HCT116 (cell line): ENCODE measurements at regions of chr16 and their contacts with region 1.

Region 1: GRCh38 chr16:88685156-88686061 is 898 bp downstream of the SNAI3 start:
- DNase-seq: no peak
- ATAC-seq: peak; percentile 19
- H3K4me3 ChIP-seq: peak overlapping the region; percentile 68 to 83
- H3K27ac ChIP-seq: peak overlapping the region; percentile 25; the same call in 1 of the 2 replicates
- H3K4me1 ChIP-seq: peaks cover 25 to 38% of the 10 kb centered on the region in 2 experiments
- H3K27me3 ChIP-seq: no peaks in the 10 kb centered on the region
- CTCF ChIP-seq: peak in 2 of 3 experiments; percentile 82 to 85; a peak in 5 of 6 replicates
- POLR2A ChIP-seq: no peak
- RAD21 ChIP-seq: no peak

Region 2: DNA sequence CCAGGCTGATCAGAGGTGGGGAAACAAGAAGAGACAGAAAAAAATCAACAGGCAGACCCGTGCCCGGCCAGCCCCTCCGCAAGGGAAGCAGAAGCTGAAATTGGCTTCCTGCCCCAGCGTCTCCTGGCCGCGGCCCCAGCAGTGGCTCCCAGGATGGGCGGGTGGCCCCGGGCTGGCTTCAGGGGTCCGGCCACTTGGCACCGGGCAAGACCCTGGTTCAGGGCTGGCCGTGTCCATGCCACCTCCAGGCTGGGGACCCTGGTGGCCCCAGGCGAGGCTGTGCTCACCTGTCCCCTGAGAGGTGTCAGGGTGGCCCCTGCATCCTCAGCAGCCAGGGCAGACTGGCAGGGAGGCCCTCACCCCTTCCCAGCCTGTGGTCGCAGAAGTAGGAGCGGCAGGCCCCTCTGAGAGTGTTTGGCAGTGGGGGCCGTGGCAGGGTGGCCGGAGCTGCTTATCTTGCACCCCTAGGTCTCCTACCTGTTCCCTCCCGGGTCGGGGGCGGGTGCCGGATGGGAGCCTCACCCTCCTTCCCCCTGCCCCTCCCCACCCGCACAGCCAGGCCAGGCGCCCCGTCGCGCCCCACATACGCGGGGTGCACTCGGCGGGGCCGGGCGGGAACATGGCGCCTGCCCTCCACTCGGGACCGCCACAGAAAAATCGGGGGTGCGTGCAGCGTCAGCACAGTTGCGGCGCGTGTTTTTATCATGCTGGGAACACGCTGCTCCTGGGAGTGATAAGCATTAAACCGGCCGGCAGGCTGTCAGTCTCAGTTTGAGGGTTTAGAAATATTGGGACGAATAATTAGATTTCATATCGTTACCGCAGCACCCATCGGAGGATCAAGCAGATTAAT is 161.9 kb before region 1 on chr16:
- CTCF ChIA-PET with region 1: no interaction called
- POLR2A ChIA-PET with region 1: no interaction called
- RAD21 ChIA-PET with region 1: no interaction called
- intact Hi-C with region 1: no loop called
- DNase-seq: no peak
- ATAC-seq: no peak
- H3K4me3 ChIP-seq: no peak overlapping the region
- H3K27ac ChIP-seq: no peak overlapping the region
- H3K4me1 ChIP-seq: peaks cover 0 to 10% of the 10 kb centered on the region in 2 experiments; a peak in 3 of 4 replicates
- H3K27me3 ChIP-seq: no peaks in the 10 kb centered on the region
- CTCF ChIP-seq: no peak
- POLR2A ChIP-seq: no peak
- RAD21 ChIP-seq: no peak

Region 3: GRCh38 chr16:88672776-88673175 is 12.6 kb before region 1 on chr16:
- CTCF ChIA-PET with region 1: interaction called, 10 read pairs
- POLR2A ChIA-PET with region 1: no interaction called
- RAD21 ChIA-PET with region 1: no interaction called
- intact Hi-C with region 1: no loop called
- DNase-seq: peak; percentile 39
- ATAC-seq: peak; percentile 93
- H3K4me3 ChIP-seq: no peak overlapping the region
- H3K27ac ChIP-seq: no peak overlapping the region
- H3K4me1 ChIP-seq: peaks cover 0 to 3% of the 10 kb centered on the region in 2 experiments; a peak in 1 of 4 replicates
- H3K27me3 ChIP-seq: no peaks in the 10 kb centered on the region
- CTCF ChIP-seq: peak in 2 of 3 experiments; percentile 84 to 90; a peak in 4 of 6 replicates
- POLR2A ChIP-seq: no peak
- RAD21 ChIP-seq: no peak; the same call in 1 of the 2 replicates